KBM-7 (cell line): ENCODE measurements at regions of chrX and their contacts with region 1.

Region 1: GRCh38 chrX:38803586-38804431 is 2.5 kb downstream of the MID1IP1 start:
- DNase-seq: peak; percentile 93

Region 2: GRCh38 chrX:38985375-38985774 is 181.6 kb after region 1 on chrX:
- in situ Hi-C with region 1: loop called (anchors 25 kb)
- DNase-seq: peak; percentile 70